Prostate gland (tissue), 2 donors: ENCODE measurements at regions of chr18 and their contacts with region 1.

Region 1: GRCh38 chr18:56748698-56749268 is 97.6 kb downstream of the WDR7 start:
- DNase-seq: no peak
- H3K4me3 ChIP-seq: no peak overlapping the region
- H3K27ac ChIP-seq: no peak overlapping the region
- H3K4me1 ChIP-seq: no peaks in the 10 kb centered on the region
- H3K27me3 ChIP-seq: no peaks in the 10 kb centered on the region
- CTCF ChIP-seq: peak in 3 of 4 experiments; percentile 31 to 60 (median 49)
- POLR2A ChIP-seq: no peak

Region 2: DNA sequence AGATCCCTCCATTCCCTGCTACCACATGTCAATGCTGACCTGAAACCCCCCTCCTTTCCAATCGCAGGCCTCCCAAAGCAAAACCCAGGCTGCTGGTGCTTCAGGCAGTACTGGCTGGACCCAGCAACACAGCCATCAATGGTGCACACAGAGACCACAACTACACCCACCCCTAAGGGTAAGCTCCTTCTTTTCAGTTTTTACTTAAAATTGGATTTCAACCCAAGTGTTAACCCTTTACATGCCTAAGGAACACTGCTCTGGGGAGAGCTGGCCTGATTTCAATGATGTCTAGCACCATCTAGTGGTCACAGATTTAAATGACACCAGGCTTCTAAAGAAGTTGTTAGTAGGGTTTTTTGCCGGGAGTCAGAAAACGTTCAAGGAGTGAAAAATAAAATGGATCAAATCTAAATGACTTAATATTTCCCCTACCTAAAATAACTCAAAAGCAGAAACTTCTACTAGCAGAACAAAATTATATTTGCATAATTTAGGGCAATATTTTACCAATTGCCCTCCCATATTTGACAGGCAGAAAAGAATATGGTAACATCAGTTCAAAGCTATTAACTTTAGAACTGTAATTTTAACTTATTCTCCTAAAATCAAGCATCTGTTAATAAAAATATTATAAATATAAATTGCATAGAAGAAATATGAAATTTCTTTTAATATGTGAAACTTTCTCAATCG is 813.1 kb after region 1 on chr18:
- intact Hi-C with region 1: loop called (anchors 2 kb)
- DNase-seq: no peak
- H3K4me3 ChIP-seq: no peak overlapping the region
- H3K27ac ChIP-seq: no peak overlapping the region
- H3K4me1 ChIP-seq: no peaks in the 10 kb centered on the region
- H3K27me3 ChIP-seq: no peaks in the 10 kb centered on the region
- CTCF ChIP-seq: peak; percentile 59 to 78 (median 68)
- POLR2A ChIP-seq: no peak